Posterior cingulate gyrus (tissue), 11 donors: ENCODE measurements at regions of chr9 and their contacts with region 1.

Region 1: GRCh38 chr9:96611302-96611701 is 8.3 kb downstream of the CDC14B start:
- DNase-seq: no peak

Region 2: GRCh38 chr9:96566498-96567207 is 44.6 kb before region 1 on chr9:
- intact Hi-C with region 1: loop called (anchors 2 kb)
- DNase-seq: peak; percentile 63 to 97 (median 78)